Mammary epithelial cell (primary cell): ENCODE measurements at regions of chr1 and their contacts with region 1.

Region 1: DNA sequence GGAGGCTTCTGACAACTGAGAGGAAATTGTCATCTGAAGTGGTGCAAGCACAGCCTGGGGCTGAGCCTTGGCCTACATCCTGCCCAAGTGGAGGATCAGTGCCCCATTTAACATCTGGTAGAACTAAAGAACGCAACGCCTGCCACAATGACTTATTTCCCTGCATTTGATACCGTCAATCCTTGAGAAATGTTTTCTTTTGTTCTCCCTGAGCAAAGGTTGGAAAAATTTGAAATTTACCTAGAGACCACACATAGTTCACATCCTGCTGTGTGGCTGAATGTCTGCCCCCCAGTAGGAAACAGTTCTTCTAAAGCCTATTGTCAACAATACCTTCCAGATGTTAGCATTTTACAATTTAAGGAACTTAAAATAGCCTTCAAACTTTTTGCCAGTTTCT is 5.6 kb upstream of the RGS4 start:
- DNase-seq: no peak
- H3K4me3 ChIP-seq: no peak overlapping the region
- H3K27ac ChIP-seq: no peak overlapping the region
- H3K4me1 ChIP-seq: no peaks in the 10 kb centered on the region
- H3K27me3 ChIP-seq: no peaks in the 10 kb centered on the region
- CTCF ChIP-seq: no peak

Region 2: GRCh38 chr1:162856260-162856659 is 207.3 kb before region 1 on chr1:
- CTCF ChIA-PET with region 1: no interaction called
- dilution Hi-C with region 1: no loop called
- in situ Hi-C with region 1: no loop called
- intact Hi-C with region 1: no loop called
- DNase-seq: peak; percentile 96
- H3K4me3 ChIP-seq: no peak overlapping the region
- H3K27ac ChIP-seq: peak overlapping the region; percentile 30
- H3K4me1 ChIP-seq: peaks cover 38% of the 10 kb centered on the region
- H3K27me3 ChIP-seq: no peaks in the 10 kb centered on the region
- CTCF ChIP-seq: no peak

Region 3: DNA sequence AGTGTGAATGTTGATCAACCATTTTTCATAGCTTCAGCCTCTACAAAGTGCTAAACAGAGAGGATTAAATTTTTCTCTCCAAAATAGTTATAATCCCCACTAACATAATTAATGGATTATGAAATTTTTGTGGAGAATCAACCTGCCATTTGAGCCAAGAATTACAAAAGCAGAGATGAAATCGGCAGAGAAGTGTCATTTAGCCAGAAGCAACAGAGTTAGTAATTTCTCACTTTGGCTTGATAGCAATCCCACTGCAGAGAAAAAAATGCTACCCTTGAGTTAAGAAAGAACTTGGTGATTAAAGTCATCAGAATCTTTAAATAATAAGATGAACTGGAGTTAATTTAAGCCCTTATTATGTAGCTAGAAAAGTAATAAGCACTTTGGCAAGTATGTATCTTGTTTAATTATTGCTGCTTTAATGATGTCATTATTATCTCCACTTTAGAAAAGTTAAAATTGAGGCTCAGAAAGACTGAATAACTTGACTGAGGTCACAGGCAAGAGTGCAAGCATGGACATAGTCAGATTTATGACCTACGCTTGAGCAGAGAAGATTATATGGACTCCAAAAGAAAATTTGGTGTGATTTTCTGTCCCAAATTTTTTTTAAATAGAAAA is 42.9 kb after region 1 on chr1:
- CTCF ChIA-PET with region 1: no interaction called
- dilution Hi-C with region 1: loop called (anchors 5 kb)
- in situ Hi-C with region 1: no loop called
- intact Hi-C with region 1: no loop called
- DNase-seq: no peak
- H3K4me3 ChIP-seq: no peak overlapping the region
- H3K27ac ChIP-seq: no peak overlapping the region
- H3K4me1 ChIP-seq: no peaks in the 10 kb centered on the region
- H3K27me3 ChIP-seq: peaks cover 1% of the 10 kb centered on the region
- CTCF ChIP-seq: no peak

Region 4: DNA sequence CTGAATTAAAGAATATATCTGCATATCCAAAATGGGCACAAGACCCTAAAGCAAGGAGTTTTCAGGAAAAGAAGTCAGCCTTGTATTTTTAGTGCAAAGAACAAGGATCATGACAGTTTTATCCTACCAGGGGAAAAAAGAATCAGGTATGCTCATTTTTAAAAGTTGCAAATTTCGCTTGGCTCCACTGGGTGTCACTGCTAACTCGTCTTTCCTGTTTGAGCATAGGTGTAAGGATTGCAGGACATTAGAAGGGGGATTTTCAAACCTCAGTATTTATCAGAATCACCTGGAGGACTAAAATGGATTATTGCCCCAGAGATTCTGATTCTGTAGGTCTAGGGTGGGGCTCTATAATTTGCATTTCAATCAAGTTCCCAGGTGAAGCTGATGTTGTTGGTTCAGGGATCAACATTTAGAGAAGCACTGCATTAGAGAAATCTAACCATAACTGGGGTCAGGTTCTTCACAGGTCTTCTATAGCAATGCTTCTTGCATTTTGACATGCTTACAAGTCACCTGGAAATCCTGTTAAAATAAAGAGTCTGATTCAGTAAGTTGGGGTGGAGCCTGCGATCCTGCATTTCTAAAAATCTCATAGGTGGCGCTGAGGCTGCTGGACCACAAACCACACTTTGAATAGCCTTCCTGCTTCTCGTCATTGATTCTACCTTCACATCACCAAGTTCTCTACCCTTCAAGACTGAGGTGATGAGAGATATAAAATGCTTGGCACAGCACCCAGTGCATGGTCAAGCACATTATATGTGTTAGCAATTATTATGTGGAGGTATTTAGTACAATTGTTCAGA is 297.7 kb after region 1 on chr1:
- CTCF ChIA-PET with region 1: interaction called, 10 read pairs
- dilution Hi-C with region 1: no loop called
- in situ Hi-C with region 1: no loop called
- intact Hi-C with region 1: no loop called
- DNase-seq: peak; percentile 12
- H3K4me3 ChIP-seq: no peak overlapping the region
- H3K27ac ChIP-seq: no peak overlapping the region
- H3K4me1 ChIP-seq: no peaks in the 10 kb centered on the region
- H3K27me3 ChIP-seq: no peaks in the 10 kb centered on the region
- CTCF ChIP-seq: peak; percentile 40 to 63